ENCODE measurements at regions of chr17 and their contacts with region 1.

Region 1: DNA sequence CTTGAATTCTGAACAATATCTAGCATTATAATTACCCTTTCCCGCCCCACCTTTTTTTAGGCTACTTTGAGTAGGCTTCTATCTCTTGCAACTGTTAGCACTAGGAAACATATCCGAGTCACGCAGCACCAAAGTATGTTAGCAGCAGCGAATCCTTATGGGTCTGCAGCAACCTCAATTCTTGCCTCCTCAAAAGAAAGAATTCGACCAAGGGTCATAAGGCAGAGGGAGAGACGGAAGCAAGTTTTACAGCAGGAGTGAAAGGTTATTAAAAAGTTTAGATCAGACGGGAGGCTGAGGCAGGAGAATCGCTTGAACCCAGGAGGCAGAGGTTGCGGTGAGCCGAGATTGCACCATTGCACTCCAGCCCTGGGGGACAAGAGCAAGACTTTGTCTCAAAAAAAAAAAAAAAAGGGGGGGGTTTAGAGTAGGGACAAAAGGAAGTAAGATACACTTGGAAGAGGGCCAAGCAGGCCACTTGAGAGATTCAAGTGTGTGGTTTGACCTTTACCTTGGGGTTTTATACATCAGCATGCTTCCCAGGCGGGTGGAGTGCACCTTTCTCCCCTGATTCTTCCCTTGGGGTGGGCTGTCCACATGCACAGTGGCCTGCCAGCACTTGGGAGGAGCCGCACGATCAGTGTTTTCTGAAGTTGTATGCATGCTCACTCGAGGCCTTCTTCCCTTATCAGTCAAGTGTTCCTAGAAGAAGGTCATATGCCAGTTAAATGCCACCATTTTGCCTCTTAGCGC is 67.7 kb downstream of the HLF start:
- DNase-seq: no peak
- CTCF ChIP-seq: no peak

Region 2: GRCh38 chr17:55348749-55349354 is 16.4 kb after region 1 on chr17:
- CTCF ChIA-PET with region 1: interaction called, 13 read pairs
- POLR2A ChIA-PET with region 1: no interaction called
- DNase-seq: peak; percentile 37
- CTCF ChIP-seq: peak; percentile 77

Region 3: DNA sequence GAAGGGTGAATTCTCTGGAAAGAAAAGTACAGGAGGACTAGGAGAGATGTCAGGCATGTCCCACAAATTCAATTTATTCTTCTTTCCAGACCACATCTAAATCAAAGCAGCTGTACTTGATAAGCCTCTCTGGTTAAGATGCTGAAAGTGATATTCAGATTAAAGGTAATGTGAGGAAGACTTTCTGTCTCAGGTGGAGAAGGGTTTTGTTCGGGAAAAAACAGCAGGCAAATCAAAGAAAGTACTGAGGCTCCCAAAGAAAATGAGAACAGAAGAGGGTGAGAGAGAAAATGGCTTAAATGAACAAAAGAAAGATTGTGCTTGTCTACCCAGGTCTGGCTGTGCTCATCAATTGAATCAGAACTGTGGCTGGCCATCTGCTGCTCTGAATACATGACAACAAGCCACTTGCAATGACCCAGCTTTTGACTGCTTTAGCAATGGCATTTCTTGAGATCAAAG is 33.6 kb after region 1 on chr17:
- CTCF ChIA-PET with region 1: no interaction called
- POLR2A ChIA-PET with region 1: no interaction called
- DNase-seq: no peak
- CTCF ChIP-seq: no peak